ENCODE measurements at regions of chr15 and their contacts with region 1.

Region 1: DNA sequence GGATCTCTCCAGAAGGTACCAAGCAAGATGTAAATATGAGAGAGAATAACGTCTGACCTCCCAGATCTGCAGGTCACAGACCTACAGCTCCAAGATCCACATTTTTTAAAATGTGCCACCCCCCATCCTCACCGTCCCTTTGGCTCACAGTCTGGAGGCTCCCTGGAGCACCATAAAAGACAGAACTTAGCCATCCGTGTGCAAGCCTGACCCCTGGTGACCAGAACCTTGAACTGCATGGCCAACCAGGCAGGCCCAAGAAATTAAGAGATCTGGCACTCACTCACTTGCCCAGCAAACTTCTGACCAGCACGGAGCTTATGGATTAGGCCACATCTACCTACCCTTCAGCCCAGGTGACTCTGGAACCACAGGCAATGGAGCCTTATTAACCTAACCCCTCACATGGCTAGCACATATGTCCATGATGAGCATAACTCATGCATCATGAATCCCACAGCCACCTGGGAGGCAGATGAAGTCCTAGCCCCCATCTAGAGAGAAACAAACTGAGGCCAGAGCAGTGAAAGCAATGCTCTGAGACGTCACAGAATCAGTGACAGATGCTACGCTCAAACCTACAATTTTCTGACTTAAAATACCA is 275.3 kb downstream of the UACA start:
- DNase-seq: peak; percentile 42 to 79 (median 62)
- ATAC-seq: peak; percentile 36
- H3K4me3 ChIP-seq: no peak overlapping the region
- H3K4me3 Mint-ChIP-seq: peak overlapping the region in 3 of 10 donors; percentile 13 to 36 (median 33)
- H3K27ac ChIP-seq: no peak overlapping the region
- H3K27ac Mint-ChIP-seq: peak overlapping the region in 2 of 9 donors; percentile 36 to 84
- H3K4me1 ChIP-seq: peaks cover 42 to 46% of the 10 kb centered on the region in 2 donors
- H3K4me1 Mint-ChIP-seq: peaks cover 45 to 86% (median 61%) of the 10 kb centered on the region in 7 donors
- H3K27me3 ChIP-seq: no peaks in the 10 kb centered on the region
- H3K27me3 Mint-ChIP-seq: peaks cover 0 to 37% (median 6%) of the 10 kb centered on the region in 5 donors

Region 2: GRCh38 chr15:69523010-69524001 is 964.8 kb before region 1 on chr15:
- CTCF ChIA-PET with region 1: no interaction called
- POLR2A ChIA-PET with region 1: no interaction called
- intact Hi-C with region 1: loop called in 1 of 2 experiments (anchors 1 kb)
- DNase-seq: peak; percentile 17 to 66 (median 40)
- ATAC-seq: peak; percentile 67
- H3K4me3 ChIP-seq: no peak overlapping the region
- H3K4me3 Mint-ChIP-seq: no peak overlapping the region
- H3K27ac ChIP-seq: no peak overlapping the region
- H3K27ac Mint-ChIP-seq: no peak overlapping the region
- H3K4me1 ChIP-seq: no peaks in the 10 kb centered on the region
- H3K4me1 Mint-ChIP-seq: peaks cover 0 to 3% (median 0%) of the 10 kb centered on the region in 7 donors
- H3K27me3 ChIP-seq: no peaks in the 10 kb centered on the region
- H3K27me3 Mint-ChIP-seq: peaks cover 0 to 29% (median 0%) of the 10 kb centered on the region in 5 donors

Region 3: DNA sequence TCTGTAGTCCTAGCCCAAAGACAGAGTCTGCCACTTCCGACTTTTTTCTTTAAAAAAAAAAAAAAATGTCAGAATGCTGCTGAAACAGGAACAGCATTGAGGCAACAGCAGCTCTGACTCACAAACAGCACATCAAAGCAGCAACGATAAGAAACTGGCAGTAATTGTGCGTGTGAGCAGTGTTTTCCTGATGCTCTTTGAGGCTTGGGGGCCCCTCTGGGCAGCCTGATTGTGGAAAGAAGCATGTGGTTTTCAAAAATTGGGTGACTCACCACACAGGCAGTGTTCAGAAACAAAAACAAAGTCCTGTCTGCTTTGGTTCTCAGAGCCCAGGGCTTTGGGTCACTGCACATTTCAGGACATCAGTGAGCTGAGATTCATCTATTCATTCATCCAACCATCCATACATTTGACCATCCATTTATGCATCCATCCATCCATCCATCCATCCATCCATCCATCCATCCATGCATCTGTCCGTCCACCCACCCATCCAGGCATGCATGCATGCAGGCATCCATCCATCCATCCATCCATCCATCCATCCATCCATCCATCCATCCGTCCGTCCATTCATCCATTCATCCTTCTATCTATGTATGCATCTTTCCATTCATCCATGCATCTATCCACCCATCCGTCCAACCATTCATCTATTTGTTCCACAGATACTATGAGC is 727.1 kb before region 1 on chr15:
- CTCF ChIA-PET with region 1: interaction called, 3 read pairs
- POLR2A ChIA-PET with region 1: no interaction called
- intact Hi-C with region 1: loop called (anchors 1 kb)
- DNase-seq: peak; percentile 34 to 88 (median 81)
- ATAC-seq: peak; percentile 84
- H3K4me3 ChIP-seq: peak overlapping the region; percentile 34
- H3K4me3 Mint-ChIP-seq: peak overlapping the region; percentile 51 to 86 (median 67)
- H3K27ac ChIP-seq: no peak overlapping the region
- H3K27ac Mint-ChIP-seq: peak overlapping the region; percentile 48 to 95 (median 88)
- H3K4me1 ChIP-seq: peaks cover 57 to 61% of the 10 kb centered on the region in 2 donors
- H3K4me1 Mint-ChIP-seq: peaks cover 52 to 79% (median 70%) of the 10 kb centered on the region in 7 donors
- H3K27me3 ChIP-seq: no peaks in the 10 kb centered on the region
- H3K27me3 Mint-ChIP-seq: peaks cover 0 to 25% (median 7%) of the 10 kb centered on the region in 5 donors

Region 4: DNA sequence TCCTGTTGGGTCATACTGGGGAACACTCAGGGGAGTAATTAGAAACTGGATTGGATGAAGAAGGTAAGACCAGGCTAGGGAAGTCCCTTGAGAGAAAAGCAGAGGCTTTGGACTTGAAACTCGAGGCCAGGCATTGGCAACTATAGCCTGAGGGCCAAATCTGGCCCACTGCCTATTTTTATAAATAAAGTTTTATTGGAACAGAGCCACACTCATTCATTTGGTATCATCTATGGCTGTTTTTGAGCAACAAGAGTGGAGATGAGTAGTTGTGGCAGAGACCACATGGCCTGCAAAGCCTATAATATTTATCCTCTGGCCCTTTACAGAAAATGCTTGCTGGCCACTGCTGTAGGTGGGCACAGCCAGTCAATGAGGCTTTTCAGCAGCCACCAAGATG is 26.1 kb before region 1 on chr15:
- CTCF ChIA-PET with region 1: interaction called, 23 read pairs
- POLR2A ChIA-PET with region 1: interaction called, 3 read pairs
- intact Hi-C with region 1: loop called (anchors 2 kb)
- DNase-seq: no peak
- ATAC-seq: no peak
- H3K4me3 ChIP-seq: no peak overlapping the region
- H3K4me3 Mint-ChIP-seq: no peak overlapping the region
- H3K27ac ChIP-seq: no peak overlapping the region
- H3K27ac Mint-ChIP-seq: no peak overlapping the region
- H3K4me1 ChIP-seq: no peaks in the 10 kb centered on the region
- H3K4me1 Mint-ChIP-seq: peaks cover 11 to 19% (median 14%) of the 10 kb centered on the region in 7 donors
- H3K27me3 ChIP-seq: no peaks in the 10 kb centered on the region
- H3K27me3 Mint-ChIP-seq: peaks cover 0 to 74% (median 5%) of the 10 kb centered on the region in 5 donors

Region 5: DNA sequence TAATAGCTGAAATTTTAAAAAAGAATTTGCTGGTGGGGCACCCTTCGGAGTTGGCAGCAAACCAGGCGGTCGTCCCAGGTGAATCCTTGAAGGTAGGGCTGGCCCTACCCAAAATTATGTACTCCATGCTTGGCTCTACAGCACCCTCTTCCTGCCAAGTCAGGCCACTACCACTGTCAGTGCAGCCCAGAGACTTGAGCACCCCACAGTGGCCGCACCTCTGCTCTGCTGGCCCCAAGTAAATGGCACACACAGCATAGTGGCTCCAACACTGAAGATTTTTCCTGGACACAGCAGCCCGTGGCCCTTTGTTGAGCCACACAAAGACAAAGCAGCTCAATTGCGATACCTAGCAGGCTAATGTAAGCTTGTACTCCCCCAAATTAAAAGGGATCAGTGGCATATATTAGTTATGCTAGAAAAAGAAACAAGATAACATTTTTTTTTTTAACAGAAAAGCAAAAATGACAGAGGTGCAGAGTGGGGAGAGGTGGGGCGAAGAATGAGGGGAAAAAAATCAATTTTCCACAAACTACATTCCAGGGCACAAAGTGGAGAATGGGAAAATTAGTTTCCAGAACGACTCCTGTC is 24.8 kb after region 1 on chr15:
- CTCF ChIA-PET with region 1: interaction called, 5 read pairs
- POLR2A ChIA-PET with region 1: no interaction called
- intact Hi-C with region 1: loop called (anchors 1 kb)
- DNase-seq: peak; percentile 30 to 72 (median 45)
- ATAC-seq: peak; percentile 79
- H3K4me3 ChIP-seq: no peak overlapping the region
- H3K4me3 Mint-ChIP-seq: no peak overlapping the region
- H3K27ac ChIP-seq: no peak overlapping the region
- H3K27ac Mint-ChIP-seq: peak overlapping the region in 1 of 9 donors; percentile 32
- H3K4me1 ChIP-seq: peaks cover 0 to 10% of the 10 kb centered on the region in 2 donors
- H3K4me1 Mint-ChIP-seq: peaks cover 10 to 38% (median 17%) of the 10 kb centered on the region in 7 donors
- H3K27me3 ChIP-seq: no peaks in the 10 kb centered on the region
- H3K27me3 Mint-ChIP-seq: peaks cover 0 to 28% (median 0%) of the 10 kb centered on the region in 5 donors

Region 6: DNA sequence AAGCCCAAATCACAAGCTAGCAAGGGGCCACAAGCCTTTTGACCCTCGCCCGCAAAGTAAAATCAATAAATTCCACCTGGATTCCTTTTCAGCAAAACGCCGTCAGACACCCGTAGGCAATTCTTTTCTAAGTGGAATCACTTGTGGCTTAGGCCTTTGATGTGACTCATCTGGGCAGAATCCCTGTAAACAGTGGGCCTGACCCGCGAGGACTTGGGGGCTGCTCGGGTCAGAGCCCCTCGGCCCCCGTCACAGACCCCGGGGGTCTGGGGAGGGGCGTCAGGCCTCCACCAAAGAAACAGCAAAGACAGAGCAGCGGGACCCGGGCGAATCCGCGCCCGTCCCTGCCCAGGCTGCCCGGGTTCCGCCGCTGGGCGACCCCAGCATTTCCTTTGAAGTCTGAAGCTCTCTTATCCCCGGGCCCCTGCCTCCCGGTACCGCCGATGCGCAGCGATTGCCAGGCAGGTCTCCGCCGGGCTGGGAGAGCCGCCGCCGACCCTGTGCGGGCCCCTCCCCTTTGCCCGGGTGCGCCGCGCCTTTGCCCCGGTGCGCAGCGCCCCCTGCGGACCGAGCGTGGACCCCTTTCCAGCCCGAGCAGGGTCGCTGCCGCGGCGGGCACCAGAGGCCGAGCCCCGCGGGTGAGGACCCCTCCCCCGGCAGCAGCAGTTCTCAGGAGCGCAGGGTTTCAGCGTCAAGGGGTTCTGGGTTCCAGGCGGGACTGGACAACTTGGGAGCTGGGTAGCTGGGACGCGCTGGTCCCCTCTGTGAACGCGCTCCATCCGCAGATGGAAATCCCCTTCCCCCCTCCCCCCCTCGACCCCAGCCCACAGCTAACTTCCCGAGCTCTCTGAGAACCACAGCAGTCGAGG is 97.0 kb after region 1 on chr15:
- CTCF ChIA-PET with region 1: interaction called, 7 read pairs
- POLR2A ChIA-PET with region 1: interaction called, 3 read pairs
- intact Hi-C with region 1: loop called in 1 of 2 experiments (anchors 1 kb)
- DNase-seq: peak; percentile 35 to 66 (median 52)
- ATAC-seq: peak; percentile 88
- H3K4me3 ChIP-seq: no peak overlapping the region
- H3K4me3 Mint-ChIP-seq: peak overlapping the region in 9 of 10 donors; percentile 42 to 84 (median 71)
- H3K27ac ChIP-seq: no peak overlapping the region
- H3K27ac Mint-ChIP-seq: peak overlapping the region in 1 of 9 donors; percentile 49
- H3K4me1 ChIP-seq: peaks cover 0 to 9% of the 10 kb centered on the region in 2 donors
- H3K4me1 Mint-ChIP-seq: peaks cover 0 to 28% (median 20%) of the 10 kb centered on the region in 7 donors
- H3K27me3 ChIP-seq: no peaks in the 10 kb centered on the region
- H3K27me3 Mint-ChIP-seq: peaks cover 0 to 36% (median 17%) of the 10 kb centered on the region in 5 donors